ENCODE measurements at regions of chr10 and their contacts with region 1.

Region 1: GRCh38 chr10:3239066-3239919 is 66.7 kb upstream of the PITRM1 start:
- DNase-seq: no peak
- ATAC-seq: peak; percentile 96
- H3K4me3 ChIP-seq: no peak overlapping the region
- H3K27ac ChIP-seq: no peak overlapping the region
- H3K4me1 ChIP-seq: no peaks in the 10 kb centered on the region
- H3K27me3 ChIP-seq: peaks cover 1 to 3% of the 10 kb centered on the region in 2 experiments; a peak in 1 of 4 replicates
- CTCF ChIP-seq: peak; percentile 86 to 93 (median 91)
- EP300 ChIP-seq: no peak
- POLR2A ChIP-seq: no peak
- RAD21 ChIP-seq: peak; percentile 97

Region 2: GRCh38 chr10:3085785-3086567 is 153.3 kb before region 1 on chr10:
- CTCF ChIA-PET with region 1: no interaction called
- POLR2A ChIA-PET with region 1: no interaction called
- RAD21 ChIA-PET with region 1: no interaction called
- SMC1A ChIA-PET with region 1: no interaction called
- in situ Hi-C with region 1: no loop called
- intact Hi-C with region 1: no loop called
- DNase-seq: no peak
- ATAC-seq: no peak
- H3K4me3 ChIP-seq: no peak overlapping the region
- H3K27ac ChIP-seq: no peak overlapping the region
- H3K4me1 ChIP-seq: peaks cover 2% of the 10 kb centered on the region
- H3K27me3 ChIP-seq: no peaks in the 10 kb centered on the region
- CTCF ChIP-seq: no peak
- EP300 ChIP-seq: no peak
- POLR2A ChIP-seq: no peak
- RAD21 ChIP-seq: no peak

Region 3: DNA sequence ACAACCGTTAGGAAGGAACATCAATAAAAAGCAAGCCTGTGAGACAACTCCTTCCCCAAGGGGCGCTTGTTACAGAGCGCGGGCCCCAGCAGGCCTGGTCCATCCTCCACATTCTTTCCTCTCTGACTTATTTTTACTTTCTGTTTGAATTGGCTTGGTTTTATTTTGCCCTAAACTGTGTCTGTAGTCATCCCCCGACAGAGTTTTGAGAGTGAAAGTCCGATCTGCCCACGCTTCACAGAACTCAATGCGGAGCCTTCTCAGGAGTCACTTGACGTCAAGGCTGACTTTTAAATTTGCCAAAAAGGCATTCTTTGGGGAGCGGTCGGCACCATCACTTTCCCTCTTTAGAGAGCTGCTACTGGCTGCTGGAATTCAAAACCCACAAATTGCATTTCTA is 695.8 kb after region 1 on chr10:
- CTCF ChIA-PET with region 1: no interaction called
- POLR2A ChIA-PET with region 1: no interaction called
- RAD21 ChIA-PET with region 1: no interaction called
- SMC1A ChIA-PET with region 1: no interaction called
- in situ Hi-C with region 1: no loop called
- intact Hi-C with region 1: loop called (anchors 10 kb)
- DNase-seq: peak; percentile 92
- ATAC-seq: peak; percentile 99
- H3K4me3 ChIP-seq: no peak overlapping the region; the same call in 1 of the 2 replicates
- H3K27ac ChIP-seq: peak overlapping the region; percentile 83
- H3K4me1 ChIP-seq: peaks cover 19% of the 10 kb centered on the region
- H3K27me3 ChIP-seq: no peaks in the 10 kb centered on the region
- CTCF ChIP-seq: peak in 1 of 3 experiments; percentile 16; a peak in 1 of 6 replicates
- EP300 ChIP-seq: peak; percentile 86 to 90
- POLR2A ChIP-seq: no peak
- RAD21 ChIP-seq: peak; percentile 26

Region 4: DNA sequence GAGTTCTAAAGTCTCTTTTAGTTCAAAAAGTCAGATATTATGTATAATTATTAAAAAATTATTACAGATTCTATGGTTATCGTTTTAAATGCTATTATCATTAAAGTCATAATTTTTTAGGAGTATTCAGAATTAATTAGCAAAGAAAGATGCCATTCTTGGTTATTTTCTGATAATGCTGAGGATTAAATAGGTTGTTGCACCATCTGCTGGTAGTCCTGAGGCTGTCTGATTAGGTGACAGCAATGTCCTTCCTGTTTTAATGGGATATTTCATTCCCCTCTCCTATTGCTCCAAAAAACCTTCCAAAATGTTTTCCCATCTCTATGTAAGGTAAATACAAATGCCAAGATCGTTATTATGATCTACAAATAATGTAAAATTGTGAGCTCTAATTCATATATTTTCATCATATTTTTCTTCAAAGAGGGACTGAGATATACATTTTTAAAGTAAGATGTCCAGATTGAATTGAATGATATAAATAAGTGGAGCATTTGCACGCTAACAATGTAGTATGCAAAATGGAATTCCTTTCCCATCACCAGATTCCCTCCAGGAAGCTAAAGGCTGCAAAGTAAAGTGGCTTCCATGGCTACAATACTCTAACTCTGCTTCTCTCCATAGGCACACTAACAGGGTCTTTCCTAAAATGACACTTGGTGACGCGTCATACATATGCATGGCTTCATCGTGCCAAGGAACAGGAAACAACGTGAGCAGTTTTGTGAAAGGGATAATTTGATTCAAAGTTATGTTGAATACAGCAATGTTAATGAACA is 1527.9 kb after region 1 on chr10:
- CTCF ChIA-PET with region 1: no interaction called
- POLR2A ChIA-PET with region 1: no interaction called
- RAD21 ChIA-PET with region 1: no interaction called
- SMC1A ChIA-PET with region 1: no interaction called
- in situ Hi-C with region 1: no loop called
- intact Hi-C with region 1: loop called (anchors 5 kb)
- DNase-seq: no peak
- ATAC-seq: no peak
- H3K4me3 ChIP-seq: no peak overlapping the region
- H3K27ac ChIP-seq: no peak overlapping the region
- H3K4me1 ChIP-seq: no peaks in the 10 kb centered on the region
- H3K27me3 ChIP-seq: no peaks in the 10 kb centered on the region
- CTCF ChIP-seq: peak; percentile 20 to 51 (median 23); a peak in 4 of 6 replicates
- EP300 ChIP-seq: no peak
- POLR2A ChIP-seq: no peak
- RAD21 ChIP-seq: peak; percentile 55